ENCODE measurements at regions of chr9 and their contacts with region 1.

Region 1: DNA sequence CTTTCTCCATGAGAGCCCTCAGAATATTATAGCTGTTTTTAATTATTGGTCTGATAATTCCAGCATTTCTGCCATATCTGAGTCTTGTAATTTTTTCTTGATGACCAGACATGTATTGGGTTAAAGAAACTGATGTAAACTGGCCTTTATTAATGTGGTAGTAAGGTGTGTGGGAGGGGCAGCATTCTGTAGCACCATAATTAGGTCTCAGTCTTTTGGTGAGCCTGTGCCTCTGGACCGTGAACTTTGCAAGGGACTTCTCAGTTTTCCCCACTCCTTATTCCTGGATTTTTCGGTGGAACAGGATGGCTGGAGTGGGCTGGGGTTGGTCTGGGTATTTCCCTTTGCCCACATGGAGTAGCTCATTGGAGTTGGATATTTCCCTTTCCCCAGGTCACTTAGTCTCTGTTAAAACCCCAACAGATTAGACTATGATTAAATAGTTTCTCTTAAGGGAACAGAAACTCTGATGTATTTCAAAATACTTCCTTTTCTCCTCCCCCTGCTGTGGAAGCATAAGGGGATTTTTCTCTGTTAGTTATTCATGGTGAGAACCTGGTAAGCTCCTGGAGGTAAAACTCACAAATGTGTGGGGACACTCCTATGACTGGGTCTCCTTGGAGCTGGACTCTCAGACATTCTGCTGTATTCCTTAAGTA is 52.4 kb downstream of the FSD1L start:
- DNase-seq: peak; percentile 12
- H3K4me3 ChIP-seq: no peak overlapping the region
- H3K27ac ChIP-seq: no peak overlapping the region
- H3K4me1 ChIP-seq: peaks cover 9% of the 10 kb centered on the region
- H3K27me3 ChIP-seq: no peaks in the 10 kb centered on the region
- CTCF ChIP-seq: no peak

Region 2: DNA sequence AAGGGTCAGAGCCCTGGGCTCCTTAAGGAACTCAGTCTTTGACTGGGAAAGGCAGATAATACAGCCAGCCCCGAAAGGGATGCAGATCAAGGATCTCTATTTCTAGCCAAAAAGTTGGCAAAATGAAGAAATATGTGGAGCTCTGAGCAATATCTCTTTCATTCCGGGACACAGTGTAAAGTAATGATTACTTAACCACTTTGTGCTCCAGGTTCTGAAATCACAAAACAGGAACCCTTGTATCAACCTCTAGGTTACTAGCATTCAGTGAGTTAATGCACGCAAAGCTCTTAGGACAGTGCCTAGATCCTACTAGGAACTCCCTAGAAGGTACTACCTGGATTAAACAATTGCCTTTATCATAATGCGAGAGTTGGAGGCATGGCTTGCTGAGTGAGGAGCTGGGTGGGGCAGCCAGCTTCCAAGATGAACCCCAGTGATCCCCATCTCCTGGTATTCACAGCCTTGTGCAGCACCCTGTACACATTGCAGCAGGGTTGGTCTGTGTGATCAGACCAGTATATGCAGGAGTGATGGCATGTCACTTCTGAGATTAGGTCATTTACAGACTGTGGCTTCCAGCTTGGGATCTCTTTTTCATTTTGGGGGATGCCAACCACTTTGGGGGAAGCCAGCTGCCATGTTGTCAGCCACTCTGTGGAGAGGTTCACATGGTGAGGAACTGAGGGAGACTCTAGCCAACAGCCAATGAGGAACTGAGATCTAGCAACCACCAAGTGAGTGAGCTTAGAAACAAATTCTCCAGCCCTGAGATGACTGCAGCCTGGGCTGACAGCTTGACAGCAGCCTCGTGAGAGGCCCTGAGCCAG is 358.9 kb before region 1 on chr9:
- CTCF ChIA-PET with region 1: no interaction called
- POLR2A ChIA-PET with region 1: no interaction called
- intact Hi-C with region 1: no loop called
- DNase-seq: no peak
- H3K4me3 ChIP-seq: no peak overlapping the region
- H3K27ac ChIP-seq: no peak overlapping the region
- H3K4me1 ChIP-seq: no peaks in the 10 kb centered on the region
- H3K27me3 ChIP-seq: peaks cover 8% of the 10 kb centered on the region
- CTCF ChIP-seq: no peak

Region 3: GRCh38 chr9:105557771-105558610 is 57.8 kb after region 1 on chr9 and contains the start of gene FKTN:
- CTCF ChIA-PET with region 1: no interaction called
- POLR2A ChIA-PET with region 1: no interaction called
- intact Hi-C with region 1: loop called (anchors 10 kb)
- DNase-seq: peak; percentile 91
- H3K4me3 ChIP-seq: peak within 1 kb of the TSS; percentile 73
- H3K27ac ChIP-seq: no peak within 1 kb of the TSS
- H3K4me1 ChIP-seq: no peaks in the 10 kb centered on the region
- H3K27me3 ChIP-seq: no peaks in the 10 kb centered on the region
- CTCF ChIP-seq: no peak
- total RNA-seq, gene FKTN: 15.4 and 15.9 TPM in 2 replicates